CD8-positive, alpha-beta T cell (primary cell): ENCODE measurements at regions of chr21 and their contacts with region 1.

Region 1: DNA sequence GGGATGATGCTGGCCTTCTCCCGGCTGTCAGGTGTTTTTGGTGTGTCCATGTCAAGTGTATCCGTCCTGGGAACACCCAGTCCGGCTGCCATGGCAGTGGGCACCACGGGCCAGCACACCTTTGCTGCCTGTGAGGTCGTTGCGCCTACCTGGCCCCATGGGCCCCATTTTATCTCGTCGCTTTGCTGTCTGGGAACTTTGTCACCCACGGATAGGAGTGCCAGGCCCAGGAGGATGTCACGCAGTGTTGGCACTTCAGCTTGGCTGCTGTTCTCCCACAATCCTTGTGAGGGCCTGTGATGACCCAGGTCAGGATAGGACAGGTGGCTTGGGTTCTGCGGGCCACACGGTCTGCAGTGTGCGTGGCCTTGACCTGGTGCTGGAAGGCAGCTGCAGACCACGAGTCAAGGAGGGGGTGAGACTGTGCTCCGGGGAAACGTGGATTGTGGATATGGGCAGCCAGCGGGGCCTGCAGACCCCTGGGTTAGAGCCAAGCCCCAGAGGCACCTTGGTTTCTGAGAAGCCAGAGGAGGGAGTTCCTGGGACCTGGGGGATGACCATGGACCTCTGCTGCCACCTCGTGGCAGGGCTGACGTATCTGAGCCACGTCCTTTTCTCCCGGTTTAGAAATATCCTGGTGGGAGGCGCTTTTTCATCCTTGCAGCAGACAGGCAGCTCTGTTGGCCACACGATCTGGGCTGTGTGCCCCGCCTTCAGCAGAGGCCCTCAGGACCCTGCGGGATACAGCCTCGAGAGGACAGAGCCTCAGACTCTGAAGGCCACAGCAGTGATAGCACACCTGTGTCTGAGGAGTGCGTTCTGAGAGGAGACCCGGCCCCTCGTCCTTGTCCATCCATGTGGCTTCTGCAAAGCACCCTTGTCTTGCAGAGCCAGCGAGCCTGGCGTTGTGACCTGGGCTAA is 161.1 kb upstream of the COL6A1 start:
- DNase-seq: peak; percentile 54 to 86 (median 82)
- ATAC-seq: peak; percentile 72
- H3K4me3 ChIP-seq: no peak overlapping the region
- H3K4me3 Mint-ChIP-seq: no peak overlapping the region
- H3K27ac ChIP-seq: no peak overlapping the region
- H3K27ac Mint-ChIP-seq: peak overlapping the region; percentile 21
- H3K4me1 ChIP-seq: peaks cover 3% of the 10 kb centered on the region
- H3K4me1 Mint-ChIP-seq: peaks cover 18% of the 10 kb centered on the region
- H3K27me3 ChIP-seq: no peaks in the 10 kb centered on the region
- H3K27me3 Mint-ChIP-seq: peaks cover 5% of the 10 kb centered on the region
- CTCF ChIP-seq: peak; percentile 80

Region 2: DNA sequence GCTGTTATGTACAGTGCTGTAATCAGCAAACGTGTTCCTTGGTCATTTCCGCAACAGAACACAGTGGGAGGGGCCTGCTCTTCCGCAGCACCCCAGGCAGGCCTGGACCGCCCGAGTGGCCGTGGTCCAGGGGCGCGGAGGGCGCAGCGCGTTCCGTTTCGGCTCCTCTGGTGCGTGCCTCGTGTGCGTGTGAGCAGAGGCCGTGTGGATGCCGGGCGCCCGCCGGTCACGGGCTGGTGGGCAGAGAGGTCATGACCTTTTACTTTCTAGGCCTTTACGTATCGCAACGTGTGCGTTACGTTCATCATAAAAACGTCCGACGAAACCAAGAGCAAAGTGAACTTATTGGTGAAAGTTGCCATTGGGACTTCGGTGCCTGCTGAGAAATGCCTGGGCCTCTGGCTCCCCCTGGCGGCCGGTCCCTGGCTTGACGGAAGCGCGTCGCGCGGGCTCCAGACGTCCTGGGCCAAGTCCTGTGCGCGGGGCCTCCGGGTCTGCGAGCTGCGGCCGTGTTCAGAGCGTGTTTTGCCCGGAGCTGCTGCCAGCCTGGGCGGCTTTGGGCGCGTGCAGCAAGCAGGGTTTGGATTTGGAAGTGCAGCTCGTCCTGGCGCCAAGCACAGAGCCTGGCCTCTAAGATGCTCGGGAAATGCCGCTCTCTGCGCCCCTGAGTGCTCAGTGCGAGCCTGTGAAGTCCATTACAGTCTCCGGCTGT is 381.1 kb before region 1 on chr21:
- CTCF ChIA-PET with region 1: interaction called, 4 read pairs
- POLR2A ChIA-PET with region 1: no interaction called
- intact Hi-C with region 1: loop called (anchors 1 kb)
- DNase-seq: peak; percentile 71 to 93 (median 86)
- ATAC-seq: peak; percentile 87
- H3K4me3 ChIP-seq: peak overlapping the region; percentile 26 to 29
- H3K4me3 Mint-ChIP-seq: peak overlapping the region; percentile 65
- H3K27ac ChIP-seq: peak overlapping the region in 1 of 2 experiments; percentile 40
- H3K27ac Mint-ChIP-seq: no peak overlapping the region
- H3K4me1 ChIP-seq: peaks cover 6% of the 10 kb centered on the region
- H3K4me1 Mint-ChIP-seq: peaks cover 6% of the 10 kb centered on the region
- H3K27me3 ChIP-seq: peaks cover 0 to 9% of the 10 kb centered on the region in 2 experiments
- H3K27me3 Mint-ChIP-seq: peaks cover 11% of the 10 kb centered on the region
- CTCF ChIP-seq: peak; percentile 90

Region 3: DNA sequence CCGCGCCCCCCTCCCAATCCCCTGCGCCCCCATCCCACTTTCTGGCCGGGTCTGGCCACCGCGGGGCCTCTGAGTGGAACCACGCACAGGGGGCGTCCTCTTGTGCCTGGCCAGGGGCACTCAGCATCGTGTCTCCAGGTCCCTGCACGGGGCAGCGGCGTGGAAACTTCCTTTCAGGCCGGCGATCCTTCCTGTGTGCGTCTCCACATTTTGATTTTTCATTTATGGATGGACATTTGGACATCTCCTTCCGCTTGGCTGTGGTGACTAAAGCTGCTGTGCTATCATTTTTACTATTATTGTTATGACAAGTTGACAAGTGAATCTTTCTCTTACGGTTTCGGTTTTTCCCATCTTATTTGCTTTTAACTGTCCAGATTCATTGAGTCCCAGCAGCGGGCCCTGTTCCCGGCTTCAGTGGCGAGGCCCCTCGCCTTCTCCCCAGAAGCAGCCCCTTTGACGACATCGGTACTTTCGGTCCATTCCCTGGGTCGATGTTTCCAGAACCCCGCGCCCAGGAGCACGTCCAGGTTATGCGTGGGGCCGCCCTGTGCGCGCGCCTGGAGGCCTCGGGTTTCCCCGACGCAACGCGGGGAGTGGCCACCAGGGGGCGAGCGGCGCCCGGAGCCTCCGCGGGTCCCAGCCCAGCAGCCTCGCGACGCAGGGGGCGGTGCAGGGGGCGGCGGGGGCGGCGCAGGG is 265.8 kb before region 1 on chr21:
- CTCF ChIA-PET with region 1: interaction called, 3 read pairs
- POLR2A ChIA-PET with region 1: no interaction called
- intact Hi-C with region 1: loop called (anchors 1 kb)
- DNase-seq: peak; percentile 80 to 97 (median 91)
- ATAC-seq: peak; percentile 90
- H3K4me3 ChIP-seq: peak overlapping the region; percentile 73 to 81
- H3K4me3 Mint-ChIP-seq: peak overlapping the region; percentile 91
- H3K27ac ChIP-seq: peak overlapping the region; percentile 37 to 60
- H3K27ac Mint-ChIP-seq: peak overlapping the region; percentile 91
- H3K4me1 ChIP-seq: peaks cover 38% of the 10 kb centered on the region
- H3K4me1 Mint-ChIP-seq: peaks cover 31% of the 10 kb centered on the region
- H3K27me3 ChIP-seq: no peaks in the 10 kb centered on the region
- H3K27me3 Mint-ChIP-seq: no peaks in the 10 kb centered on the region
- CTCF ChIP-seq: peak; percentile 60

Region 4: GRCh38 chr21:45695086-45695485 is 125.3 kb before region 1 on chr21:
- CTCF ChIA-PET with region 1: interaction called, 3 read pairs
- POLR2A ChIA-PET with region 1: no interaction called
- intact Hi-C with region 1: loop called in 1 of 2 experiments (anchors 1 kb)
- DNase-seq: no peak
- ATAC-seq: no peak
- H3K4me3 ChIP-seq: no peak overlapping the region
- H3K4me3 Mint-ChIP-seq: no peak overlapping the region
- H3K27ac ChIP-seq: no peak overlapping the region
- H3K27ac Mint-ChIP-seq: no peak overlapping the region
- H3K4me1 ChIP-seq: peaks cover 15% of the 10 kb centered on the region
- H3K4me1 Mint-ChIP-seq: peaks cover 22% of the 10 kb centered on the region
- H3K27me3 ChIP-seq: no peaks in the 10 kb centered on the region
- H3K27me3 Mint-ChIP-seq: no peaks in the 10 kb centered on the region
- CTCF ChIP-seq: no peak

Region 5: GRCh38 chr21:45794027-45794426 is 26.4 kb before region 1 on chr21:
- CTCF ChIA-PET with region 1: no interaction called
- POLR2A ChIA-PET with region 1: no interaction called
- intact Hi-C with region 1: no loop called
- DNase-seq: no peak
- ATAC-seq: no peak
- H3K4me3 ChIP-seq: no peak overlapping the region
- H3K4me3 Mint-ChIP-seq: no peak overlapping the region
- H3K27ac ChIP-seq: no peak overlapping the region
- H3K27ac Mint-ChIP-seq: no peak overlapping the region
- H3K4me1 ChIP-seq: no peaks in the 10 kb centered on the region
- H3K4me1 Mint-ChIP-seq: no peaks in the 10 kb centered on the region
- H3K27me3 ChIP-seq: no peaks in the 10 kb centered on the region
- H3K27me3 Mint-ChIP-seq: no peaks in the 10 kb centered on the region
- CTCF ChIP-seq: no peak

Region 6: DNA sequence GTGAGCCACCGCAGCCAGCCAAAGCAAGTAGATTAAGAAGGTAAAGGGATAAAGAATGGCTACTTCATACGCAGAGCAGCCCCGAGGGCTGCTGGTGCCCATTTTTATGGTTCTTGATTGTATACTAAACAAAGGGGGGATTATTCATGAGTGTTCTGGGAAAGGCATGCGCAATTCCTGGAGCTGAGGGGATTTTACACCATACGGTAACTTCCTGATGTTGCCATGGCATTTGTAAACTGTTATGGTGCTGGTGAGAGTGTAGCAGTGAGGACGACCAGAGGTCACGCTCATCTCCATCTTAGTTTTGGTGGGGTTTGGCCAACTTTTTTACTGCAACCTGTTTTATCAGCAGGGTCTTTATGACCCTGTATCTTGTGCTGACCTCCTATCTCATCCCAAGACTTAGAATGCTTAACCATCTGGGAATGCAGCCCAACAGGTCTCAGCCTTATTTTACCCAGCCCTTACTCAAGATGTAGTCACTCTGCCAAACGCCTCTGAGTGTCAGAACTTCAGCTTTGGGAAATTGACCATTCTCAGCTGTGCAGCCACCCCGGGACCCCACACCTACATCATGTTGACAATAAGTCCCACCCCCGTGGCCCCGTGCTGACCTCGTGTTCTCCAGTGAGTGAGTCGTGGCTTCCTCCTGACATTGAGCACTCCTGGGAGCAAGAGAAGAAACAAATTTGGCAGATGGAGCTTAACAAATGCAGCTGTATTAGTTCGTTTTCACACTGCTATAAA is 11.7 kb after region 1 on chr21:
- CTCF ChIA-PET with region 1: interaction called, 19 read pairs
- POLR2A ChIA-PET with region 1: no interaction called
- intact Hi-C with region 1: no loop called
- DNase-seq: no peak
- ATAC-seq: no peak
- H3K4me3 ChIP-seq: no peak overlapping the region
- H3K4me3 Mint-ChIP-seq: no peak overlapping the region
- H3K27ac ChIP-seq: no peak overlapping the region
- H3K27ac Mint-ChIP-seq: no peak overlapping the region
- H3K4me1 ChIP-seq: peaks cover 9% of the 10 kb centered on the region
- H3K4me1 Mint-ChIP-seq: peaks cover 9% of the 10 kb centered on the region
- H3K27me3 ChIP-seq: no peaks in the 10 kb centered on the region
- H3K27me3 Mint-ChIP-seq: no peaks in the 10 kb centered on the region
- CTCF ChIP-seq: no peak

Region 7: GRCh38 chr21:45923146-45923545 is 102.7 kb after region 1 on chr21:
- CTCF ChIA-PET with region 1: no interaction called
- POLR2A ChIA-PET with region 1: no interaction called
- intact Hi-C with region 1: loop called in 1 of 2 experiments (anchors 1 kb)
- DNase-seq: peak; percentile 49 to 83 (median 75)
- ATAC-seq: peak; percentile 100
- H3K4me3 ChIP-seq: no peak overlapping the region
- H3K4me3 Mint-ChIP-seq: no peak overlapping the region
- H3K27ac ChIP-seq: no peak overlapping the region
- H3K27ac Mint-ChIP-seq: no peak overlapping the region
- H3K4me1 ChIP-seq: peaks cover 18% of the 10 kb centered on the region
- H3K4me1 Mint-ChIP-seq: peaks cover 19% of the 10 kb centered on the region
- H3K27me3 ChIP-seq: no peaks in the 10 kb centered on the region
- H3K27me3 Mint-ChIP-seq: no peaks in the 10 kb centered on the region
- CTCF ChIP-seq: peak; percentile 84